Ascending aorta (tissue), 2 donors: ENCODE measurements at regions of chr9 and their contacts with region 1.

Region 1: DNA sequence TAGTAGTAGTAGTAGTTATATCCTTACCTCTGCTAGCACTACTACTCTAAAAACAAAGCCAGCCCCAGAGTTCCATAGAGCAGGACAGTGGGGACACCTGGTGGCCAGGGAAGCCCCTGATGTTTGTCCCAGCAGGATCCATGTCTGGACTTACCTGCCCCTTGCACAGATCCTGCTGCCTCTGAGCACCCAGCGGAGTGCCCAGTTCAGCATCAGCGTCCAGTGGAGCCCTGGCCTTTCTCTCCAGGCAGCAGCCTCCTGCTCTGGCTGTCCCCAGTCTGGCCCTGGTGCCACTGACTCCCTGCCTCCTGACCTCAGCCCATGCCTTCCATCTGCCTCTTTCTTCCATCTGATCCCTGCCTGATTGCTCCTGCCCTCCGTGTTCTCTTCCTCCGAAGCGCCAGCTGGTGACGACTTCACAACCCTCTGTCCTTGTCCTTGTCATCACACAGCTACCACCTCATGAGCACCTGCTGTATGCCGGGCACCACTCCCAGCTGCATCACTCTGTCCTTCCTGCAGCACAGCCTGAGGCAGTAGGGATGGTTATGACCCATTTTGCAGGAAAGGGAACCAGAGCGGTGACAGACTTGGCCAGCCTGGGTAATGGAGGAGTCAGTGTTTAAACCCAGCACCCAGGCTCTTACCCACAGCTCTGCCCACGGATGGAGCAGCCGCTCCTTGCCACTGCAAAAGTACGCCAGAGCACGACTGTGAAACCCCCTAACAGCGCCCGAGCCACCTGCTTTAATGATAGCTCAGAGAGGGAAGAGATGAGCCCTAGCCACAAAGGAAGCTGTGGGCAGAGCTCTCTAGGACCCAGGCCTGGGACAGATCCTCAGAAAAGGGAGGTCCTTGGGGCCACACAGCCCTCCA is 11.5 kb downstream of the SARDH start:
- DNase-seq: peak in 1 of 2 donors; percentile 58
- H3K4me3 ChIP-seq: no peak overlapping the region
- H3K27ac ChIP-seq: no peak overlapping the region
- H3K4me1 ChIP-seq: no peaks in the 10 kb centered on the region
- H3K27me3 ChIP-seq: no peaks in the 10 kb centered on the region
- CTCF ChIP-seq: peak; percentile 4 to 39 (median 10)

Region 2: GRCh38 chr9:133406480-133407307 is 319.9 kb before region 1 on chr9:
- intact Hi-C with region 1: loop called (anchors 5 kb)
- DNase-seq: peak; percentile 16 to 79
- H3K4me3 ChIP-seq: no peak overlapping the region
- H3K27ac ChIP-seq: no peak overlapping the region
- H3K4me1 ChIP-seq: no peaks in the 10 kb centered on the region
- H3K27me3 ChIP-seq: no peaks in the 10 kb centered on the region
- CTCF ChIP-seq: peak; percentile 84 to 87 (median 87)

Region 3: GRCh38 chr9:133532937-133533668 is 193.5 kb before region 1 on chr9:
- intact Hi-C with region 1: loop called (anchors 2 kb)
- DNase-seq: peak in 1 of 2 donors; percentile 78
- H3K4me3 ChIP-seq: no peak overlapping the region
- H3K27ac ChIP-seq: no peak overlapping the region
- H3K4me1 ChIP-seq: peaks cover 9 to 13% of the 10 kb centered on the region in 2 donors
- H3K27me3 ChIP-seq: no peaks in the 10 kb centered on the region
- CTCF ChIP-seq: peak; percentile 45 to 64 (median 53)

Region 4: DNA sequence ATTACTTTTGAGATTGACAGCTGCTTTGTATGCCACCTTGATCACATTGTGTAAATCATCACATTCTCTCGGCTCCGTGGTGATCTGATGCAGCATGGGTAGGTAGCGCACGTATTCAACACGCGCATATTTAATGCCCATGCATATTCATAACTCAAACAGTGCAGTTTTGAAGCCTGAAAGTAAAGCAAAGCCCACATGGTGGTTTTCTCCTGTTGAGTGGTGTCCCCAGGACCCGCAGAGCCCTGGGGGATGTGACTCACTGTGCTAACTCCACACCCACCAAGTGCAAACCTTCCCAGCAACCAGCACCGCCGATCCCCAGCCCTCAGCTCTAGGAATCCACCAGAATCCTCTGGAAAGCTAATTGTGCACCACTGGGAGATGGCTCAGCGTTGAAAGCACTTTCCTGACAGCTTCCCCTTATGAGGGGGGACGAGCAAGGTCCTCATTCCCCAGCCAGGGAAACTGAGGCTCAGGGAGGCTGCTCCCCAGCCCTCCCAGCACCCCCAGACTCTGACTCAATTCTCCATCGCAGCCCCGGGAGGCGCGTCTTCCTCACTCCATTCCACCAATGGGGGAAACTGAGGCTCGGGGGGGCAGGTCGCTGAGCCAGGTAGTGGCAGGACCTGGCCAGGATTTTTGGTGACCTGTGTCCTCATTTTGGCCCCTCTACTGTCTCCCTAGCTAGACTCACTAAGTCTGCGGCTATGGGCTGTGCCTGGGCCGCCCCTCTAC is 34.8 kb before region 1 on chr9:
- intact Hi-C with region 1: no loop called
- DNase-seq: no peak
- H3K4me3 ChIP-seq: no peak overlapping the region
- H3K27ac ChIP-seq: no peak overlapping the region
- H3K4me1 ChIP-seq: no peaks in the 10 kb centered on the region
- H3K27me3 ChIP-seq: no peaks in the 10 kb centered on the region
- CTCF ChIP-seq: no peak

Region 5: DNA sequence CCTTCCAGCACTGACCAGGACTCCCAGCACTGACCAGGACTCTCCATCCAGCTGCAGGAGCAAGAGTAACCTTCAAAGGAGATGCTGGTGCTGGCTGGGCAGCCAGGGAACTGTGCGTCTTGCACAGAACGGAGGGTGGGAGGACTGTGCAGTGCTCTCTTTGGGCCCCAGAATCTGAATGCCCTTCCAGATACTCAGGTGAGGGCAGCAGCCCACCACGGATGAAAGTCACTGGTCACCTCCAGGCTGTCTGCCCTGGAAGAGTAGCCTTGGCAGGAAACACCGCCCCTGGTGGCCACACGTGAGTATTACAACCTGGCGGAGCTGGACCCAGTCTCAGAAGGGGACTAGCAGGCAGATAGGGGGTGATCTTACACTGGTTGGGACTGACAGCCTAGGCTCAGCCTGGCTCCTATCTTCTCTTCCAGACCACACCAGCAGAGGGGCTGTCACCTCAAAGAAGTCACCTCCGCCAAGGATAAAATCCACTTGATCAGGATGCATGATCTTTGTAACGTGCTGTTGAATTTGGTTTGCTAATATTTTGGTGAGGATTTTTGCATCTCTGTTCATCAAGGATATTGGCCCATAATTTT is 16.3 kb after region 1 on chr9:
- intact Hi-C with region 1: no loop called
- DNase-seq: peak in 1 of 2 donors; percentile 79
- H3K4me3 ChIP-seq: no peak overlapping the region
- H3K27ac ChIP-seq: no peak overlapping the region
- H3K4me1 ChIP-seq: no peaks in the 10 kb centered on the region
- H3K27me3 ChIP-seq: no peaks in the 10 kb centered on the region
- CTCF ChIP-seq: peak; percentile 78 to 96 (median 94)

Region 6: GRCh38 chr9:133782157-133783130 is 55.8 kb after region 1 on chr9:
- intact Hi-C with region 1: no loop called
- DNase-seq: no peak
- H3K4me3 ChIP-seq: no peak overlapping the region
- H3K27ac ChIP-seq: no peak overlapping the region
- H3K4me1 ChIP-seq: no peaks in the 10 kb centered on the region
- H3K27me3 ChIP-seq: no peaks in the 10 kb centered on the region
- CTCF ChIP-seq: peak; percentile 23 to 80 (median 61)